ENCODE measurements at regions of chr18 and their contacts with region 1.

Region 1: GRCh38 chr18:32552421-32553030 is 81.8 kb upstream of the GAREM1 start:
- DNase-seq: no peak
- ATAC-seq: peak; percentile 71 to 90 (median 81)
- H3K4me3 ChIP-seq: no peak overlapping the region
- H3K27ac ChIP-seq: no peak overlapping the region
- H3K4me1 ChIP-seq: no peaks in the 10 kb centered on the region
- H3K27me3 ChIP-seq: no peaks in the 10 kb centered on the region
- CTCF ChIP-seq: peak; percentile 90

Region 2: GRCh38 chr18:32158108-32158624 is 394.4 kb before region 1 on chr18:
- intact Hi-C with region 1: loop called (anchors 1 to 2 kb)
- DNase-seq: peak; percentile 71 to 84
- ATAC-seq: peak; percentile 95 to 100 (median 98)
- H3K4me3 ChIP-seq: peak overlapping the region; percentile 46
- H3K27ac ChIP-seq: no peak overlapping the region
- H3K4me1 ChIP-seq: peaks cover 6% of the 10 kb centered on the region
- H3K27me3 ChIP-seq: no peaks in the 10 kb centered on the region
- CTCF ChIP-seq: peak; percentile 83

Region 3: DNA sequence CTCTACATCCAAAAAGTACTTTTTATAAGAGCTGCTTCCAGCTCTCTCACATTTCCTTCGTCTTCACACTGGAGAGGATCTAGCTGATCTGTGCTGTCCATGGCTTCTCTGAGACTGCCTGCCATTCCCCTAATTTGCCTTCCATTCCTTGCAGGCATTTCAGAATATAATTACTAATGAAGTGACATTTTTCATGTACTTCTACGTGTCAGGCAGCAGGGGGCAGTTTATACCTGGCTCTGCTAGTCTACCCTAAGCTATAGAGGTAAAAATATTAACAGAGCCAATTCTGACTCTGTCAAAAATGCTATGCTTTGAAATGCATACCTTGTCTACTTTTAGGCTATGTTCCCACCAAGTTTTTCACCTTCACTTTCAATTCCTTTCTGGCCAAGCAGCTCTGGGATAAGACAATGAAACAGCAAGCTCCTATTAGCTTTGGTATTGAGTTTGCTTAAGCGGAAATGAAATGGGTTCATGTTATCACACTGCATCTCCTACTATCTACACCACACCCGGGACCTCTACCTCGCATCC is 280.8 kb before region 1 on chr18:
- intact Hi-C with region 1: loop called (anchors 2 to 5 kb)
- DNase-seq: no peak
- ATAC-seq: peak; percentile 67 to 87 (median 70)
- H3K4me3 ChIP-seq: no peak overlapping the region
- H3K27ac ChIP-seq: no peak overlapping the region
- H3K4me1 ChIP-seq: no peaks in the 10 kb centered on the region
- H3K27me3 ChIP-seq: no peaks in the 10 kb centered on the region
- CTCF ChIP-seq: peak; percentile 72

Region 4: GRCh38 chr18:32289483-32290075 is 262.9 kb before region 1 on chr18:
- intact Hi-C with region 1: loop called in 1 of 2 experiments (anchors 5 kb)
- DNase-seq: no peak
- ATAC-seq: peak; percentile 69 to 88 (median 80)
- H3K4me3 ChIP-seq: no peak overlapping the region
- H3K27ac ChIP-seq: no peak overlapping the region
- H3K4me1 ChIP-seq: no peaks in the 10 kb centered on the region
- H3K27me3 ChIP-seq: no peaks in the 10 kb centered on the region
- CTCF ChIP-seq: peak; percentile 67

Measured in psoas muscle (tissue), 8 donors.